ENCODE measurements at regions of chr1 and their contacts with region 1.

Region 1: DNA sequence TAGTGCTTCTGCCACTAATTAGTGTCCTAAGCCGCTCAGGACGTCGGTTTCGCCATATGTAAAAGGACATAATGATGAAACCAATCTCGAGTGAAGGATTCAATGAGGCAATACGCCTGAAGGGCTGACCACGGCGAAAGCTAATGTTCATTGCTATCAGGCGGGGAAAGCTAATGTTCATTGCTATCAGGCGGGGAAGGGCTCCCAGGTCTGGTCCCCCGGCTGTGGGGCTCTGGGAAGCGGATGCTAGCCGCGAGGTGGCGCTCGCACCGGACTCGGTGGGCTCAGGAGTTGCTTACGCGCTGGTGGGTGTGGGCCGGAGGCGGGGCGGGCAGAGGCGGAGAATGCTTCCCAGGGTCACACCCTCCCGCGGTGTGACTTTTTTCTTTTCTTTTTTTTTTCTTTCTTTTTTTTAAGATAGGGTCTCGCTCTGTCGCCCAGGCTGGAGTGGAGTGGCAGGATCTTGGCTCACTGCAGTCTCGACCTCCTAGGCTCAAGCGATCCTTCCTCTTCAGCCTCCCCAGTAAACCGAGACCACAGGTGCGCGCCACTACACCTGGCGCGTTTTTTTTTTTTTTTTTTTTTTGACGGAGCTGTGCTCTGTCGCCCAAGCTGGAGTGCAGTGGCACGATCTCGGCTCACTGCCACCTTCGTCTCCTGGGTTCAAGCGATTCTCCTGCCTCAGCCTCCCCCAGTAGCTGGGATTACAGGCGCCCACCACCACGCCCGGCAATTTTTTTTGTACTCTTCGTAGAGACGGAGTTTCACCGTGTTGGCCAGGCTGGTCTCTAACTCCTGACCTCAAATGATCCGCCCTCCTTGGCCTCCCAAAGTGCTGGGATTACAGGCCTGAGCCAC is 1.1 kb upstream of the PEAR1 start:
- DNase-seq: peak; percentile 68
- H3K4me3 ChIP-seq: peak overlapping the region; percentile 41
- H3K27ac ChIP-seq: peak overlapping the region; percentile 61
- H3K27me3 ChIP-seq: peaks cover 6% of the 10 kb centered on the region
- CTCF ChIP-seq: peak; percentile 82

Region 2: GRCh38 chr1:156797212-156797871 is 95.1 kb before region 1 on chr1:
- CTCF ChIA-PET with region 1: interaction called, 108 read pairs
- POLR2A ChIA-PET with region 1: no interaction called
- DNase-seq: peak; percentile 26
- H3K4me3 ChIP-seq: no peak overlapping the region
- H3K27ac ChIP-seq: no peak overlapping the region
- H3K27me3 ChIP-seq: no peaks in the 10 kb centered on the region
- CTCF ChIP-seq: peak; percentile 94

Region 3: GRCh38 chr1:156821801-156822200 is 70.6 kb before region 1 on chr1:
- CTCF ChIA-PET with region 1: interaction called, 11 read pairs
- POLR2A ChIA-PET with region 1: no interaction called
- DNase-seq: no peak
- H3K4me3 ChIP-seq: no peak overlapping the region
- H3K27ac ChIP-seq: no peak overlapping the region
- H3K27me3 ChIP-seq: peaks cover 24% of the 10 kb centered on the region
- CTCF ChIP-seq: no peak

Region 4: DNA sequence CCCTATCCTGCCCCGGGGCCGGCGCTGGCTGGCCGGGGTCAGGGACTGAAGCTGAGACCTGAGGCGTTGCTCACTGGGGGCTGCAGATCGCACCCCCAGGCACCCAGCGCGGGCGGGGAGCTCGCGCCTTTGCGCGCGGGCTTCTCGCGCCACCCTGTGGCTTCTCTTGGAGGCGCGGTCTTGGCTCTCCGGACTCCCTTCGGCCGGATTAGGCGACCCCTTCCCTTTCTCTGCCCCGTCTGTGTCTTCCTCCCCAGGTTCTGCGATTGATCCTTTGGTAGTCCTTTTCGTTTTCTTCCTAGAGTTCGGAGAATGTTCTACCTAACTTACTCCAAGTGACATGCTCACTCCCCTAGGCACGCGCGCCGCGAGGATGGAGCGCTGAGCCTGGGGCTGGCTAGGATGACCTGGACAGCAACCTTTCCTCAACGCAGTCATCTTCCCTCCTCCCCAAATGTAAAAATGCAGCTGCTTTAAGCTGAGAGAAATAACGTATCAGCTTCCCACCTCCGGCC is 32.2 kb before region 1 on chr1:
- CTCF ChIA-PET with region 1: interaction called, 26 read pairs
- POLR2A ChIA-PET with region 1: interaction called, 3 read pairs
- DNase-seq: no peak
- H3K4me3 ChIP-seq: peak overlapping the region; percentile 32
- H3K27ac ChIP-seq: no peak overlapping the region
- H3K27me3 ChIP-seq: peaks cover 81% of the 10 kb centered on the region
- CTCF ChIP-seq: peak; percentile 78

Region 5: DNA sequence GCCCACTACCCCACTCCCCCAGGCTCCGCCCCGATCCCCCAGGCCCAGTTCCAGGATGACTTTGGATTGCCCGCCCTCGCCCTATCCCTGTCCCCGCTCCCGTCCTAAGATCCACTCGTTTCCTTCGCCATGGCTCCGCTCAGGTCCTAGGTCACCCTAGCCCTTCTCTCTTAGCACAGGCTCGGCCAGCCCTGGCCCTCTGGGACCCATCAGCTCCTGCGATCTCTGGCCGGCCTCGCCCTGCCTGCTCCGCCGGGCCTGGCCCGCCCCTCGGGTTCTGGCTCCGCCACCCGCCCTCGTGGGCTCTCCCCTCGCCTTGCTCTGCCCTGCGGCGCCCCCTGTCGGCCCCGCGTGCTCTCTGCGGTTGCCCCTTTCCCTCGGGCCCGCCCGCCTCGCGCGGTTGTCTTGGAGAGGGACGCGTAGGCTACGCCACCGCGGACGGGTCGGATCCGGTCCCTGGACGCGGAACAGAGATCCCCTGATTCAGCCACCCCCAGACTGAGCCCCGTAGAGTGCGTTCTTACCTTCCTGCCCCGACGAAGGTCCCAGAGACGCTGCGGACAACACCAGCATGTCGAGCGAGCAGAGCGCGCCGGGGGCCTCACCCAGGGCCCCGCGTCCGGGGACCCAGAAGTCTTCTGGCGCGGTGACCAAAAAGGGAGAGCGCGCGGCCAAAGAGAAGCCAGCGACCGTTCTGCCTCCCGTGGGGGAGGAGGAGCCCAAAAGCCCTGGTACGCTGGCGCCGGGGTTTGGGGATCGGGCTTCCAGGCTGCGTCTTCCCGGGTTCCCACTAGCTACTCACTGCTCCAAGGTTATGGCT is 28.0 kb after region 1 on chr1 and contains the start of gene LRRC71:
- CTCF ChIA-PET with region 1: interaction called, 62 read pairs
- POLR2A ChIA-PET with region 1: interaction called, 7 read pairs
- DNase-seq: peak; percentile 29
- H3K4me3 ChIP-seq: peak within 1 kb of the TSS; percentile 45
- H3K27ac ChIP-seq: no peak within 1 kb of the TSS
- H3K27me3 ChIP-seq: peaks cover 44% of the 10 kb centered on the region
- CTCF ChIP-seq: peak; percentile 86
- polyA plus RNA-seq, gene LRRC71: not detected in 2 replicates

Measured in AG04450 (cell line).